Body of pancreas (tissue), 4 donors: ENCODE measurements at regions of chr17 and their contacts with region 1.

Region 1: DNA sequence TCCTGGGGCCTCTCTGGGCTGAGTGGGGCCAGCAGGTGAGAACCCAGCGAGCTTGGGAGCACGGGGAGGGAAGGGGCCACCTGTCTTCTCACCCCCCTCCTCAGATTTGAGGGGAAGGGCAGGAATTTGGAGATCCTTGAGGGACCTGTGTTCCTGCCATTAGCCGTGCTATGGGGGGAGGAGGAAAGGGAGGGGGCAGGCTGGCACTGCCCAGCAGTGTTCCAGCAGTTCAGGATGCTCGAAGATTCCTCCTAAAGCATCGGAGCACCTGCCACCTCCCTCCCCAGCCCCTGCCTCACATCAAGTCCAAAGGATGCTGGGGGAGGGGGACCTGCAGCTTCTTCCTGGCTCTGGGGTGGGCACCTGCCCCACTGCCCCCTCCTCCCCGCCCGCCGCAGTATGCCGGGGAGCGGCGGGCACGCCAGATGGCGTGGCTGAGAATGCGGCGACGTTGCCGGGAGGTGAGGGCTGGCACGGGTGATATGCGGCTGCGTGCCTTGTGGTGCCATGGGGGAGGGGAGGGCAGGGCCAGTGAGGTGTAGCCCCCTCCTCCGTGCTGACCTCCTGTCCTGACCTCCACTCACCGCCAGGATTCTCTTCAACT is 4.7 kb upstream of the NEUROD2 start:
- DNase-seq: no peak
- ATAC-seq: no peak
- H3K4me3 ChIP-seq: no peak overlapping the region
- H3K27ac ChIP-seq: no peak overlapping the region
- H3K4me1 ChIP-seq: peaks cover 5% of the 10 kb centered on the region
- H3K27me3 ChIP-seq: peaks cover 0 to under 1% of the 10 kb centered on the region in 2 donors
- CTCF ChIP-seq: no peak
- POLR2A ChIP-seq: no peak

Region 2: GRCh38 chr17:39755554-39756379 is 143.4 kb after region 1 on chr17:
- intact Hi-C with region 1: loop called (anchors 5 kb)
- DNase-seq: no peak
- ATAC-seq: no peak
- H3K4me3 ChIP-seq: no peak overlapping the region
- H3K27ac ChIP-seq: peak overlapping the region in 1 of 4 donors; percentile 93
- H3K4me1 ChIP-seq: peaks cover 29% of the 10 kb centered on the region
- H3K27me3 ChIP-seq: no peaks in the 10 kb centered on the region
- CTCF ChIP-seq: no peak
- POLR2A ChIP-seq: no peak